Activated CD4-positive, alpha-beta memory T cell treated with anti-CD3 and anti-CD28 coated beads for 36 hours (primary cell): ENCODE measurements at regions of chr17 and their contacts with region 1.

Region 1: DNA sequence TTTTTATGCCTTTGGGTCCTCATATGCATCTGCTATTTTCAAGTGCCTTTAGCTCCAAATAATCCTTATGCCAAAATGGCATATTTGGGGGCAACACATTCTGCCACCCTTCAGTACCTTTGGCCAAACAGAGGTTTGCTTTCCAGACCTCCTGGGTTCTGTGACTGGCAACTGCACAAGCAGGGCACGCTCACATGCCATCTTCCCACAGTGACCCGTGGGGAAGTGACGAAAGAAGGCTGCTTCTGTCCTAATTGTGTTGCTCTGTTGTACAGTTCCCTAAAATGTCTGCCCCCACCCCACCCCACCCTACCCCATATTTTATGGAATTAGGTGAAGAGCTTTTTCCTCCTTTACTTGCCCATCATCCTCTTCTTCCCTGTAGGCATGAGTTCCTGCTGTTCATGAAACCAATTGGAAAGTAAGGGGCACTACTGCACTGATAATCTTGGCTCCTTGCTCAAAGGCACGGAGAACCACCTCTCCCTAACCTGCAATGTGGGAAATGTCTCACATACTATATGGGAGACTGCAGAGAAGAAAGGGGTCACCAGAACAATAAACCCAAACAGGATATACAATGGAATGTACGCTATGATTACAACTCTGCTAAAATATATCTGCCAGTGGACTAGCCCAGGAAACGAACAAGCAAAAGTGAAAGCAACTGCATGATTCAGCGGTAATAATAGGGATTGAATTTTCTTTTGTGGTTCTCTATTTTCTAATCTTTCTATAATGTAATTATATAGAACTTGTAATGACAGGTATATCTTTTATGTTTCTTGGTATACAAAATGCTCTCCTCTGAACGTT is 3.3 kb upstream of the SLFN12L start:
- DNase-seq: peak; percentile 73
- H3K4me3 Mint-ChIP-seq: peak overlapping the region; percentile 77
- H3K27ac Mint-ChIP-seq: peak overlapping the region; percentile 97
- H3K4me1 Mint-ChIP-seq: peaks cover 39% of the 10 kb centered on the region
- H3K27me3 Mint-ChIP-seq: no peaks in the 10 kb centered on the region

Region 2: GRCh38 chr17:35161281-35161761 is 379.5 kb before region 1 on chr17:
- CTCF ChIA-PET with region 1: no interaction called
- POLR2A ChIA-PET with region 1: interaction called, 3 read pairs
- intact Hi-C with region 1: loop called (anchors 5 kb)
- DNase-seq: peak; percentile 26
- H3K4me3 Mint-ChIP-seq: peak overlapping the region; percentile 28
- H3K27ac Mint-ChIP-seq: peak overlapping the region; percentile 46
- H3K4me1 Mint-ChIP-seq: peaks cover 52% of the 10 kb centered on the region
- H3K27me3 Mint-ChIP-seq: no peaks in the 10 kb centered on the region

Region 3: GRCh38 chr17:35373534-35373983 is 167.2 kb before region 1 on chr17 and contains the start of gene SLFN11:
- CTCF ChIA-PET with region 1: interaction called, 7 read pairs
- POLR2A ChIA-PET with region 1: interaction called, 26 read pairs
- intact Hi-C with region 1: loop called (anchors 2 kb)
- DNase-seq: peak; percentile 94
- H3K4me3 Mint-ChIP-seq: peak within 1 kb of the TSS; percentile 96
- H3K27ac Mint-ChIP-seq: peak within 1 kb of the TSS; percentile 97
- H3K4me1 Mint-ChIP-seq: peaks cover 53% of the 10 kb centered on the region
- H3K27me3 Mint-ChIP-seq: no peaks in the 10 kb centered on the region
- total RNA-seq, gene SLFN11: 64.8 to 68.8 TPM

Region 4: DNA sequence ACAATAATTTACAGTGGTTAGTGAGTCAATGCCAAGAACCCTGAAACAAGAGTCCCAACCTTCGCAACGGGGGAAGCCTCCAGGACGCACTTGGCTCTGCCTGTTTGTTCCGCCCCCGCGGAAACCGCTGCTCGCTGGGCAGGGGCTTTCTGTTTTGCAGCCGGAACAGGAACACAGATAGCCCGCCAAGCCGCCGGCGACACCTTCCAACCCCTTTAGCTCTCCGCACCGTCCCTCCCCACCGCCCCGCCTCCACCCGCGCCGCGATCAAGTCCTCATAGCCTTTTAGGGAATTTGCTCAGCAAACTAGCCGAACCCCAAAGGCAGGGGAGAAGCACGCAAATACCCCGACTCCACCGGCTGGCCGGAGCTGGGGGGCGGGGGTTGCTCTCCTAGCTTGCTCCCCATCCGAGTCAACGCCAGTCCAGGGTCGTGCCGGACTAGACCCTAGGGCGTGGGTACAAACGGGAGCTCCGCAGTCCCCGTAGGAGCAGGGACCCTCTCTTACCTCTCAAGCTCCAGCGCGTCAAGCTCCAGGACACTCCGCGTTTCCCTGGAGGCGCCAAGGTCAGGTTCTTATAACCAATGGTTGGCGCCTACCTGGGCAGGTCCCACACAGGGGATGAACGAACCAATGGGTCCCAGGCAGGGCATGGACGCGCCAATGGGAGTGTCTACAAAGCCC is 92.4 kb before region 1 on chr17 and contains the start of gene SLFN13:
- CTCF ChIA-PET with region 1: no interaction called
- POLR2A ChIA-PET with region 1: interaction called, 5 read pairs
- intact Hi-C with region 1: loop called (anchors 1 kb)
- DNase-seq: peak; percentile 97
- H3K4me3 Mint-ChIP-seq: peak within 1 kb of the TSS; percentile 57
- H3K27ac Mint-ChIP-seq: peak within 1 kb of the TSS; percentile 33
- H3K4me1 Mint-ChIP-seq: peaks cover 16% of the 10 kb centered on the region
- H3K27me3 Mint-ChIP-seq: no peaks in the 10 kb centered on the region
- total RNA-seq, gene SLFN13: 46.0 to 48.7 TPM

Region 5: GRCh38 chr17:35514564-35514963 is 26.2 kb before region 1 on chr17:
- CTCF ChIA-PET with region 1: no interaction called
- POLR2A ChIA-PET with region 1: no interaction called
- intact Hi-C with region 1: no loop called
- DNase-seq: no peak
- H3K4me3 Mint-ChIP-seq: no peak overlapping the region
- H3K27ac Mint-ChIP-seq: no peak overlapping the region
- H3K4me1 Mint-ChIP-seq: peaks cover 74% of the 10 kb centered on the region
- H3K27me3 Mint-ChIP-seq: no peaks in the 10 kb centered on the region

Region 6: DNA sequence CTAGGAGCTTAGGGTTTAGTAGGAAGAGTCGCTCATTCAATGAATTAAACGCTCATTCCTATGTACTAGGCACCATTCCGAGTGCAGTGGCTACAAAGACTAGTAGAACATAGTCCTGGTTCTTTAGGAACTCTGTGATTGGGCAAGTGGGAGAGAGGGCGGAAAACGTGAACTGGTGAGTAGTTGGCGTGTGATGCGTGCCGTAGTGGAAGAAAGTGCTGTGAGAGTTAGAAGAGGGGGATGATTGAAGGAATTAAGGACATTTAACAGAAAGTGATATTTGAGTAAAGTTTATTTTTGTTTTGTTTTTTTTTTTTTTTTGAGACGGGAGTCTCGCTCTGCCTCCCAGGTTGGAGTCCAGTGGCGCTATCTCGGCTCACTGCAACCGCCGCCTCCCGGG is 27.7 kb after region 1 on chr17:
- CTCF ChIA-PET with region 1: interaction called, 3 read pairs
- POLR2A ChIA-PET with region 1: interaction called, 4 read pairs
- intact Hi-C with region 1: loop called (anchors 1 kb)
- DNase-seq: peak; percentile 68
- H3K4me3 Mint-ChIP-seq: peak overlapping the region; percentile 92
- H3K27ac Mint-ChIP-seq: peak overlapping the region; percentile 86
- H3K4me1 Mint-ChIP-seq: peaks cover 27% of the 10 kb centered on the region
- H3K27me3 Mint-ChIP-seq: no peaks in the 10 kb centered on the region

Region 7: GRCh38 chr17:35587074-35587971 is 46.5 kb after region 1 on chr17 and contains the start of gene AP2B1:
- CTCF ChIA-PET with region 1: interaction called, 5 read pairs
- POLR2A ChIA-PET with region 1: interaction called, 7 read pairs
- intact Hi-C with region 1: loop called (anchors 2 kb)
- DNase-seq: peak; percentile 98
- H3K4me3 Mint-ChIP-seq: peak within 1 kb of the TSS; percentile 93
- H3K27ac Mint-ChIP-seq: peak within 1 kb of the TSS; percentile 97
- H3K4me1 Mint-ChIP-seq: peaks cover 23% of the 10 kb centered on the region
- H3K27me3 Mint-ChIP-seq: no peaks in the 10 kb centered on the region
- total RNA-seq, gene AP2B1: 187 to 192 TPM

Region 8: DNA sequence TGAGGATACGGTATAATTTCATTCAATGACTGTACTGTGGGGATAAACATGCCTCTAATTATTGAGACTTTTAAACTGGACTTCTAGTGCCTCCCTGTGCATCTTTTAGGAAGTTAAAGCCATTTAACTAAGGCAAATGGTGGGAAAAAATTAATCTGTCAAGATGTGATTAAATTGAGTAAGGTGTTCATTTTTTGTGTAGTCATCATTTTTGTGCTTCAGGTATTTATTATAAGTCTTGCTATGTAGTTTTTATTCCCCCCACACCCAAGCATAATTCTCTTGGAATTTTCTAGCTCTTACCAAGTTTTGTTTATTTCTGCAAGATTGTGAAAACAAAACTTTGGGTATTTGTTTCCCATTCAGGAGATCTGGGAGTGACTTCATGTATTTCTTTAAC is 278.7 kb after region 1 on chr17:
- CTCF ChIA-PET with region 1: no interaction called
- POLR2A ChIA-PET with region 1: no interaction called
- intact Hi-C with region 1: no loop called
- DNase-seq: no peak
- H3K4me3 Mint-ChIP-seq: no peak overlapping the region
- H3K27ac Mint-ChIP-seq: no peak overlapping the region
- H3K4me1 Mint-ChIP-seq: peaks cover 32% of the 10 kb centered on the region
- H3K27me3 Mint-ChIP-seq: no peaks in the 10 kb centered on the region

Region 9: GRCh38 chr17:35849469-35850348 is 308.9 kb after region 1 on chr17:
- CTCF ChIA-PET with region 1: no interaction called
- POLR2A ChIA-PET with region 1: no interaction called
- intact Hi-C with region 1: no loop called
- DNase-seq: peak; percentile 62
- H3K4me3 Mint-ChIP-seq: no peak overlapping the region
- H3K27ac Mint-ChIP-seq: no peak overlapping the region
- H3K4me1 Mint-ChIP-seq: peaks cover 13% of the 10 kb centered on the region
- H3K27me3 Mint-ChIP-seq: no peaks in the 10 kb centered on the region